HepG2 (cell line): ENCODE measurements at regions of chr16 and their contacts with region 1.

Region 1: DNA sequence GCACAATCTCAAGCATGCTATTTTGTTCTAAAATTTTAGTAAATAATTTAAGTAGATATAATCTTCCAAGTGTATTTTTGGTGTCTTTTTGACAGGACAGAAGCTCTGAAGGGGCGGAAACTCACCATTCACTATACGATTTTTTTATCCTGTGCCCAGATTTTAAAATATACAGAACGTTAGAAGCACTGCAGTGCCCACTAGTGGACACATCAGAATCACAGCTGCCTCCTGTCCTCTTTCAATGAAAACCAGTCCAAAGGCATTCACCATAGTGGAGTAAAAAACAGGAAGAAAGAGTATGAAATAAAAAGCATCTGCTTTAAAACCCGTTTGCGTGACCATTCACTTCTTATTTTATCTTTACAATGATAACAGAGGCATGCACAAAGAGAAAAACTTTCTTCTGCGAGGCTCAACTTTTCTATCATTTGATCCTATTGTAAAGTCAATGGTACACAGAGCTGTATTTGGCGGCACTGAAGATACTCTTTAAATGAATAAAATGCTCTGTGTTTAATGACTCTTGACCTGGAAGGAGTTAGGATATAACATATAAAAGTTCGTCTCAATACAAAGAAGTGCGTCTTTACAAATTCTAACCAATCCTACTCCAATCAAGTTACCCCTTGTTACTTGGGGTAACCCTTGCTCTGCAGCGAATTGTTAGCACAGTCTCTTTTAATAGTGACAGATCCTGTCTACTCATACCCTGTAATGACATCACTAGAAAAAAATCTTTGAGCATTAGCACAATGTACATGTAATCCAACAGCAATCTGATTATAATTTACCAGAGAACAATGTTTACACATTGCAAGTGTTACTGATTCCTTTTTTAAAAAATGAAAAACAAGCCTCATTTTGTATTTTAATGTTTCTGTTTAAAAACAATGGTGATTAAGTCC is 339.8 kb upstream of the PSMD7 start:
- DNase-seq: peak; percentile 50
- ATAC-seq: peak; percentile 72
- H3K4me3 ChIP-seq: no peak overlapping the region
- H3K27ac ChIP-seq: no peak overlapping the region
- H3K4me1 ChIP-seq: no peaks in the 10 kb centered on the region
- H3K27me3 ChIP-seq: peaks cover 0 to 8% of the 10 kb centered on the region in 2 experiments; a peak in 1 of 5 replicates
- CTCF ChIP-seq: peak; percentile 77
- EP300 ChIP-seq: no peak
- POLR2A ChIP-seq: no peak
- RAD21 ChIP-seq: peak; percentile 31; the same call in 1 of the 2 replicates

Region 2: GRCh38 chr16:73565262-73565661 is 391.6 kb before region 1 on chr16:
- CTCF ChIA-PET with region 1: interaction called, 6 read pairs
- POLR2A ChIA-PET with region 1: no interaction called
- in situ Hi-C with region 1: loop called (anchors 10 kb)
- intact Hi-C with region 1: loop called (anchors 2 kb)
- DNase-seq: peak; percentile 23
- ATAC-seq: peak; percentile 70
- H3K4me3 ChIP-seq: no peak overlapping the region
- H3K27ac ChIP-seq: no peak overlapping the region
- H3K4me1 ChIP-seq: no peaks in the 10 kb centered on the region
- H3K27me3 ChIP-seq: peaks cover 0 to 31% of the 10 kb centered on the region in 2 experiments; a peak in 3 of 5 replicates
- CTCF ChIP-seq: peak; percentile 57
- EP300 ChIP-seq: no peak
- POLR2A ChIP-seq: no peak
- RAD21 ChIP-seq: 0 out of 2 replicates have a peak, but pooled peaks have one; percentile 22

Region 3: GRCh38 chr16:73713778-73714495 is 242.9 kb before region 1 on chr16:
- CTCF ChIA-PET with region 1: interaction called, 11 read pairs
- POLR2A ChIA-PET with region 1: no interaction called
- in situ Hi-C with region 1: no loop called
- intact Hi-C with region 1: loop called (anchors 1 kb)
- DNase-seq: peak; percentile 42
- ATAC-seq: peak; percentile 76
- H3K4me3 ChIP-seq: no peak overlapping the region
- H3K27ac ChIP-seq: no peak overlapping the region
- H3K4me1 ChIP-seq: no peaks in the 10 kb centered on the region
- H3K27me3 ChIP-seq: peaks cover 2 to 9% of the 10 kb centered on the region in 2 experiments; a peak in 3 of 5 replicates
- CTCF ChIP-seq: peak; percentile 63
- EP300 ChIP-seq: no peak
- POLR2A ChIP-seq: no peak
- RAD21 ChIP-seq: peak; percentile 33; the same call in 1 of the 2 replicates

Region 4: DNA sequence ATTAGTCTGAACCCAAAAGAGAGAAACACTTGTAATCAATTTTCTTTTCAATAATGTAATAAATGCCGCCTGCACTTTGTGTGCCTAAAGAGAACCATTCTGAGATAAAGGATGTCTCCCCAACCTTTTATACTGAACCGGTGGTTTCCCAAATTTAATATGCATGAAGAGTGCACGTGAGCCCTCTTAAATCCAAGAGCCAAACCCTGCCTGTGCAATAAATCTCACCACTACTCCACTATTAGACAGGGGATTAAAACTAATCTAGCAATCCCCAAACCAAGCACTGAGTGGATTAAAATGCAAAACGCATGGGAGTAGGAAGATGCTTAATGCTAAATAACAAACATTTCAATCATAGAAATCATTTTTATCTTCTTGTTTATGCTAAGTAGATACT is 11.2 kb before region 1 on chr16:
- CTCF ChIA-PET with region 1: no interaction called
- POLR2A ChIA-PET with region 1: no interaction called
- in situ Hi-C with region 1: no loop called
- intact Hi-C with region 1: no loop called
- DNase-seq: no peak
- ATAC-seq: no peak
- H3K4me3 ChIP-seq: no peak overlapping the region
- H3K27ac ChIP-seq: no peak overlapping the region
- H3K4me1 ChIP-seq: no peaks in the 10 kb centered on the region
- H3K27me3 ChIP-seq: no peaks in the 10 kb centered on the region
- CTCF ChIP-seq: no peak
- EP300 ChIP-seq: no peak
- POLR2A ChIP-seq: no peak
- RAD21 ChIP-seq: no peak

Region 5: DNA sequence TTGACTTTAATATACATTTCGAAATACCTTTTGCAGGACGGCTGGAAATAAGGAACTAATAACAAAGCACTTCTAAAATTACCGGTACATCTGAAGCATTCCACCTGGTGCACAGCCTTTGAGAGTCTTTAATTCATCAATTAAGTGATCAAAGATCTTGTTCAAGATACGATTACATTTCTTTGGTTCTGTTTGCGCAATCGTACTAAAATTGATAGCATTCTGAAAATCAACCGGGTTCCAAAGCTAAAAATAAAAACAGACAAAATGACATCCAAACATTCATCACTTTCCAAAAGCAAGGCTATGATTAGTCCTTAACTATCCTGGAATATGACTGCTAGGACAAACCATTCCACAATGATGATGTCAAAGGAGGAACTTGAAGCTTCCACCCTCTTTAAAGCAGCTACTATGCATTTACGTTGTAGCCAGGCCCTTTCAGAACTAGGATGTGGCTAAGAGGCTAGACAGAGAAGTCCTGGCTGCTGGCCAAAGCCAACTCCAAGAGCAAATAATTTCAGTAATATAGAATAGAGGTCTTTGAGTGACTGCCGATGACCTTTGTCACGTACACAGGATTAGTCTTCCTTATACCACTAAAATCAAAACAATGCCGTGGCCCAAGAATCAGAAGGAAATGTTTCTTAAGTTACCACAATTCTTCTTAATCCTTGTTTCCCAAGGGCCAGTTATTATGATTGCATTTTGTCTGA is 39.9 kb after region 1 on chr16:
- CTCF ChIA-PET with region 1: no interaction called
- POLR2A ChIA-PET with region 1: no interaction called
- in situ Hi-C with region 1: no loop called
- intact Hi-C with region 1: no loop called
- DNase-seq: peak; percentile 77
- ATAC-seq: peak; percentile 81
- H3K4me3 ChIP-seq: no peak overlapping the region
- H3K27ac ChIP-seq: no peak overlapping the region
- H3K4me1 ChIP-seq: peaks cover 16% of the 10 kb centered on the region
- H3K27me3 ChIP-seq: no peaks in the 10 kb centered on the region
- CTCF ChIP-seq: no peak
- EP300 ChIP-seq: peak in 1 of 2 experiments; percentile 7; a peak in 1 of 4 replicates
- POLR2A ChIP-seq: no peak
- RAD21 ChIP-seq: no peak

Region 6: DNA sequence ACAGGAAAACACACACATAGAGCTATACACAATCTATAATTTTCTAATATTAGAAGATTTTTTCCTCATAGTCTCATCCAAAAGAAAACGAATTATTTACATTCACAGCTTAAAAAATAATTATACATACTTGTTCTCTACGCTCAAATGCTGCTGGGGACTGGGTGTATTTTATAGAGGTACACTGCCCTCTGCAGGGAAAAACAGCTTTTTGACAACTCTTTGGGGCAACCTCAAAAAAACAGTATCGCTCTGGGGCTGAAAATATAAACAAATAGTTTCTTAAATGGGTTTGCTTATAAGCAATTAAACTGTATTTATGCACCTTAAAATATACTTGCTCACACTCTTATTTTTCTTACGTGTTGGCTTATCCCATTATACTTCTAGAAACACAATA is 78.0 kb after region 1 on chr16:
- CTCF ChIA-PET with region 1: no interaction called
- POLR2A ChIA-PET with region 1: no interaction called
- in situ Hi-C with region 1: no loop called
- intact Hi-C with region 1: loop called (anchors 2 kb)
- DNase-seq: peak; percentile 27
- ATAC-seq: peak; percentile 49; the same call in 1 of the 3 replicates
- H3K4me3 ChIP-seq: no peak overlapping the region
- H3K27ac ChIP-seq: no peak overlapping the region
- H3K4me1 ChIP-seq: no peaks in the 10 kb centered on the region
- H3K27me3 ChIP-seq: peaks cover 0 to 13% of the 10 kb centered on the region in 2 experiments; a peak in 2 of 5 replicates
- CTCF ChIP-seq: peak; percentile 51
- EP300 ChIP-seq: no peak
- POLR2A ChIP-seq: no peak
- RAD21 ChIP-seq: no peak; the same call in 1 of the 2 replicates

Region 7: GRCh38 chr16:74275002-74275636 is 318.3 kb after region 1 on chr16:
- CTCF ChIA-PET with region 1: no interaction called
- POLR2A ChIA-PET with region 1: no interaction called
- in situ Hi-C with region 1: no loop called
- intact Hi-C with region 1: loop called (anchors 2 kb)
- DNase-seq: no peak
- ATAC-seq: no peak
- H3K4me3 ChIP-seq: no peak overlapping the region
- H3K27ac ChIP-seq: no peak overlapping the region
- H3K4me1 ChIP-seq: no peaks in the 10 kb centered on the region
- H3K27me3 ChIP-seq: no peaks in the 10 kb centered on the region; a peak in 1 of 5 replicates
- CTCF ChIP-seq: peak; percentile 23; the same call in 1 of the 2 replicates
- EP300 ChIP-seq: no peak
- POLR2A ChIP-seq: no peak
- RAD21 ChIP-seq: 0 out of 2 replicates have a peak, but pooled peaks have one; percentile 13